Activated CD4-positive, alpha-beta memory T cell treated with anti-CD3 and anti-CD28 coated beads for 36 hours (primary cell): ENCODE measurements at regions of chr5 and their contacts with region 1.

Region 1: DNA sequence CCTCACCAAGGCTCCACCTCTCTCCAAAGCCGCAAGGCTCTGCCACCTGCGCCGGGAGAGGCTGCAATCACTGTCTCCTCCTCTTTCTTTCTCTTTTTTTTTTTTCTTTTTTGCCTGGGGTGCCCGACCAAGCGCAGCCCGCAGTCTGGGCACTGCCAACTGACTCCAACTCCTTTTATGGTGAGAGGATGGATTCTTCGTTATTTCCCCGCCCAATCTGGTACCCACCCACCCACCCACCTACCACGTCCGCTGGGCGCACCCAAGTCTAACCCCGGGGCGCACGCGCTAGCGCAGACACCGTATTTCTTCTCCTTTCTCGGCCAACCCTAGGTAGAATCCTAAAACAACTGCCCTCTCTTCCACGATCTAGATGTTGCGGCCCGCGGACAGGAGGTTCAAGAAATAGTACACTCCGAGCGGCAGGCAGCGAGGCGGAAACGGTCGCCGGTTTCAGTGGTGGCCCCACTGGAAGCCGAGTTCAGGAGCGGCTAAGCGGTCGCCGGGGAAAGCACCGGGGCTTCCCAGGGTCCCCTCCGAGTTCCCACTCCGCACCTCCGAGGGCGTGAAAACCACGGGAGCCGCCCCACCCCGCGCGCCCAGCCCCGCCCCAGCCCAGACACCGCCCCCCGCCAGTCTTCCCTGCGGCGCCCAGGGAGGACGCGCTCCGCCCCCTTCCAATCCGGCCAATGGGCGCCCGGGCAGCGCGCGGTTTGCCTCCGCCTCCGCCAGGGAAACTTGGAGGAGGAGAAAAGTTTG is 381 bp upstream of the PTGER4 start:
- DNase-seq: peak; percentile 96
- H3K4me3 Mint-ChIP-seq: peak overlapping the region; percentile 93
- H3K27ac Mint-ChIP-seq: peak overlapping the region; percentile 97
- H3K4me1 Mint-ChIP-seq: peaks cover 37% of the 10 kb centered on the region
- H3K27me3 Mint-ChIP-seq: no peaks in the 10 kb centered on the region

Region 2: GRCh38 chr5:40437452-40437861 is 241.9 kb before region 1 on chr5:
- CTCF ChIA-PET with region 1: interaction called, 3 read pairs
- POLR2A ChIA-PET with region 1: interaction called, 5 read pairs
- intact Hi-C with region 1: loop called (anchors 2 kb)
- DNase-seq: peak; percentile 58
- H3K4me3 Mint-ChIP-seq: no peak overlapping the region
- H3K27ac Mint-ChIP-seq: peak overlapping the region; percentile 70
- H3K4me1 Mint-ChIP-seq: peaks cover 74% of the 10 kb centered on the region
- H3K27me3 Mint-ChIP-seq: no peaks in the 10 kb centered on the region

Region 3: DNA sequence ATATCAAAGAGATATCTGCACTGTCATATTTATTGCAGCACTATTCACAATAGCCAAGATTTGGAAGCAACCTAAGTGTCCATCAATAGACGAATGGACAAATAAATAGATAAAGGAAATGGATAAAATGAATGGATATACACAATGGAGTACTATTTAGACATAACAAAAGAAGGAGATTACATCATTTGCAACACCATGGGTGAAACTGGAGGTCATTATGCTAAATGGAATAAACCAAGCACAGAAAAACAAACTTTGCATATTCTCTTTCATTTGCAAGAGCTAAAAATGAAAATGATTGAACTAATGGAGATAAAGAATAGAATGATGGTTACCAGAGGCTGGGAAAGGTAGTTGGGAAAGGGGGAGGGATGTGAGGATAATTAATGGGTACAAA is 154.7 kb before region 1 on chr5:
- CTCF ChIA-PET with region 1: no interaction called
- POLR2A ChIA-PET with region 1: no interaction called
- intact Hi-C with region 1: no loop called
- DNase-seq: no peak
- H3K4me3 Mint-ChIP-seq: no peak overlapping the region
- H3K27ac Mint-ChIP-seq: no peak overlapping the region
- H3K4me1 Mint-ChIP-seq: peaks cover 8% of the 10 kb centered on the region
- H3K27me3 Mint-ChIP-seq: no peaks in the 10 kb centered on the region

Region 4: GRCh38 chr5:40594811-40595210 is 84.5 kb before region 1 on chr5:
- CTCF ChIA-PET with region 1: no interaction called
- POLR2A ChIA-PET with region 1: no interaction called
- intact Hi-C with region 1: no loop called
- DNase-seq: no peak
- H3K4me3 Mint-ChIP-seq: no peak overlapping the region
- H3K27ac Mint-ChIP-seq: no peak overlapping the region
- H3K4me1 Mint-ChIP-seq: peaks cover 31% of the 10 kb centered on the region
- H3K27me3 Mint-ChIP-seq: no peaks in the 10 kb centered on the region

Region 5: DNA sequence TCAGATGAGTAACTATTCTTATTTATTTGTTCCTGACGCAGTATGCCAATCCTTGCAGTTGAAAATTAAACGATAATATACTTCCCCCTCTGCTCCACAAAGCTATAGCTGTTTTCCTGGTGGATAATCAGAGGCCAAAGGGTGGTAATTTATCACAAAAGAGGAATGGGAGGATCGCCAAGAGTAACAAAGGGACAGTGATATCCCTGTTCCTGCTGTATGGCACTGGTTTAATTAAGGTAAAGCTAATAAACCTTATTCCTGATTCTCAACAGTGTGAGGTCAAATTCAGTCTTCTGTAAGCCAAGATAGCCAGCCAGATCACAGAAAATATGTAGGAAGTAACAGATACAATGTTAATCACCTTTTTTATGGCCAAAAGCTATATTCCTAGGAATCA is 33.0 kb before region 1 on chr5:
- CTCF ChIA-PET with region 1: no interaction called
- POLR2A ChIA-PET with region 1: no interaction called
- intact Hi-C with region 1: loop called (anchors 1 kb)
- DNase-seq: no peak
- H3K4me3 Mint-ChIP-seq: no peak overlapping the region
- H3K27ac Mint-ChIP-seq: no peak overlapping the region
- H3K4me1 Mint-ChIP-seq: peaks cover 25% of the 10 kb centered on the region
- H3K27me3 Mint-ChIP-seq: no peaks in the 10 kb centered on the region

Region 6: GRCh38 chr5:40653221-40654022 is 25.9 kb before region 1 on chr5:
- CTCF ChIA-PET with region 1: interaction called, 4 read pairs
- POLR2A ChIA-PET with region 1: interaction called, 5 read pairs
- intact Hi-C with region 1: loop called (anchors 1 kb)
- DNase-seq: no peak
- H3K4me3 Mint-ChIP-seq: peak overlapping the region; percentile 74
- H3K27ac Mint-ChIP-seq: peak overlapping the region; percentile 80
- H3K4me1 Mint-ChIP-seq: peaks cover 60% of the 10 kb centered on the region
- H3K27me3 Mint-ChIP-seq: no peaks in the 10 kb centered on the region